Activated CD4-positive, alpha-beta T cell treated with anti-CD3 and anti-CD28 coated beads, Interleukin-2, amount 10 ng/mL, durations not matched to agents 24 days and 14 days (primary cell): ENCODE measurements at regions of chr3 and their contacts with region 1.

Region 1: GRCh38 chr3:107271787-107272387 is 105.4 kb upstream of the CCDC54 start:
- DNase-seq: no peak
- H3K4me3 Mint-ChIP-seq: no peak overlapping the region
- H3K27ac Mint-ChIP-seq: no peak overlapping the region
- H3K4me1 Mint-ChIP-seq: no peaks in the 10 kb centered on the region
- H3K27me3 Mint-ChIP-seq: peaks cover 35% of the 10 kb centered on the region

Region 2: DNA sequence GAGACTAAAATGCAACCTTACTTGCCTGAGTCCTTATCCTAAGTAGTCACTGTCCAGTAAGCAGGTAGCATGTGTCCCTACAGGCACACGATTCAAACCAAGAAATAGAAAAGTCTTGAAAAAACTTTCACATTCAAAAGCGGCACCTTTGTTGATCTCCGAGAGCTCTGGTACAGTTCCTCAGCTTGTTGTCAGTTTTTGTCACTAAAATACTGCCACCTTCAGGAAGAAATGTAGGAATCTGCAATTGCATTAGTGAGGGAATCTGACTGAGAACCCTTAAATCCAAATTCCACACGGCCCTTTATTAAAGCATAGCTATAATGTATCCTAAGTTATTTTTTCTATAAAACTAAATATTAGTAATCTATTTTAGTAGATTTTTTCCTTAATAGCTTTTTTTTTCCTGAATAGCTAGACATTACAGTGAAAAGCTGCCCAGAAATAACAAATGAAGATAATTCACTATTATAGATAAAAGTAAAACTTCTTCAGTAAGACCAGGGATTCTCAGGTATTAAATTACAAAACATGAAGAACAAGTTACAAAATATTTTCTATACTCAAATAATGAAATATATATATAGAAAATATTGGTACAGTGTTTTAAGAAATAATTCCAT is 149.4 kb after region 1 on chr3:
- intact Hi-C with region 1: loop called (anchors 1 kb)
- DNase-seq: peak; percentile 78
- H3K4me3 Mint-ChIP-seq: peak overlapping the region; percentile 50
- H3K27ac Mint-ChIP-seq: no peak overlapping the region
- H3K4me1 Mint-ChIP-seq: peaks cover 2% of the 10 kb centered on the region
- H3K27me3 Mint-ChIP-seq: peaks cover 37% of the 10 kb centered on the region

Region 3: DNA sequence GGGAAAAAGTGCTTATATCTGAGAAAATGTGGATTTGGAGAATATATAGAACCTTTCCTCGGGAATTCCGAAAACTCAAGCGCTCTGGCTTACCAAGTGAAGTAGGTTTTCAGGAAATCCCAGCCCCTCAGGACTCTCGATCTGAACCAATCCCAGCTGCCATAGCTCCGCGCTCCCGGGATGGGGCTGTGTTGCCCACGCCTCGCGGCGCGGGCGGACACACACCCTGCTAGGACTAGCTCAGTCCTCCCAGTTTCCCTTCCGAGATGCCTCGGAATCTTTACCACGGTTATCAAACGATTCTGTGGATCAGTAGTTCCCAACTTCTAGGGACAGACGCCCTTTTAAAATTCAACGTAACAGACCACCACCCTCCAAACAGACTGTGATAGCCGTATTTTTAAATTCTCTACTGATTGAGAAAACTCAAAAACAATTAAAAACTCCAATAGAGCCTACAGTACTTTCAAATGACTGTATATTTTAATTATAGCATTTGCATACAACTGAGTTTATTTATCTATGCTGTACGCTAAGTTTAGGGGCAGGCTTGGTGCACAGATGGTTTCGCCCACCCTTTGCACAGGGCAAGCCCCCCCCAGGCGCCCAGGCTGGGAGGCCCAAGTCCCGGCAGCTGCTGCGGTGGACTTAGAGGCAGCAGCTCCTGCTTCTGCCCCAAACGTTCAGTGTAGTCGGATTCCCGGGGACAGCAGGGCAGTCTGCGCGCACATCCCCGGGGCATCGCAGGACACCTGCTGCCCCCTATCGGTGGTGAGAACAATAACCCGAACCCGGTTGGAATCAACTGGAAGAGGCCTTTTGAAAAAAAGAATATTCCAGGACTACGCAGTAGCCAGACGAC is 157.7 kb after region 1 on chr3:
- intact Hi-C with region 1: loop called (anchors 2 kb)
- DNase-seq: peak; percentile 87
- H3K4me3 Mint-ChIP-seq: peak overlapping the region; percentile 82
- H3K27ac Mint-ChIP-seq: peak overlapping the region; percentile 45
- H3K4me1 Mint-ChIP-seq: peaks cover 14% of the 10 kb centered on the region
- H3K27me3 Mint-ChIP-seq: peaks cover 51% of the 10 kb centered on the region

Region 4: GRCh38 chr3:107543666-107544065 is 271.8 kb after region 1 on chr3:
- intact Hi-C with region 1: loop called (anchors 1 kb)
- DNase-seq: no peak
- H3K4me3 Mint-ChIP-seq: no peak overlapping the region
- H3K27ac Mint-ChIP-seq: no peak overlapping the region
- H3K4me1 Mint-ChIP-seq: no peaks in the 10 kb centered on the region
- H3K27me3 Mint-ChIP-seq: no peaks in the 10 kb centered on the region

Region 5: GRCh38 chr3:107884719-107885460 is 613.0 kb after region 1 on chr3:
- intact Hi-C with region 1: no loop called
- DNase-seq: peak; percentile 37
- H3K4me3 Mint-ChIP-seq: no peak overlapping the region
- H3K27ac Mint-ChIP-seq: no peak overlapping the region
- H3K4me1 Mint-ChIP-seq: no peaks in the 10 kb centered on the region
- H3K27me3 Mint-ChIP-seq: peaks cover 2% of the 10 kb centered on the region